T-cell (primary cell): ENCODE measurements at regions of chr2 and their contacts with region 1.

Region 1: GRCh38 chr2:202221873-202222272 is 16.5 kb downstream of the SUMO1 start:
- DNase-seq: no peak
- ATAC-seq: no peak
- H3K4me3 ChIP-seq: no peak overlapping the region
- H3K4me3 Mint-ChIP-seq: no peak overlapping the region
- H3K27ac ChIP-seq: no peak overlapping the region
- H3K27ac Mint-ChIP-seq: peak overlapping the region in 1 of 2 donors; percentile 0
- H3K4me1 ChIP-seq: peaks cover 0 to 2% of the 10 kb centered on the region in 2 experiments
- H3K4me1 Mint-ChIP-seq: peaks cover 47 to 53% (median 50%) of the 10 kb centered on the region in 3 donors
- H3K27me3 ChIP-seq: no peaks in the 10 kb centered on the region
- H3K27me3 Mint-ChIP-seq: no peaks in the 10 kb centered on the region

Region 2: GRCh38 chr2:202249521-202249850 is 27.6 kb after region 1 on chr2:
- CTCF ChIA-PET with region 1: no interaction called
- POLR2A ChIA-PET with region 1: no interaction called
- DNase-seq: no peak
- ATAC-seq: no peak
- H3K4me3 ChIP-seq: no peak overlapping the region
- H3K4me3 Mint-ChIP-seq: no peak overlapping the region
- H3K27ac ChIP-seq: no peak overlapping the region
- H3K27ac Mint-ChIP-seq: no peak overlapping the region
- H3K4me1 ChIP-seq: no peaks in the 10 kb centered on the region
- H3K4me1 Mint-ChIP-seq: no peaks in the 10 kb centered on the region
- H3K27me3 ChIP-seq: no peaks in the 10 kb centered on the region
- H3K27me3 Mint-ChIP-seq: peaks cover 3 to 4% of the 10 kb centered on the region in 2 donors

Region 3: DNA sequence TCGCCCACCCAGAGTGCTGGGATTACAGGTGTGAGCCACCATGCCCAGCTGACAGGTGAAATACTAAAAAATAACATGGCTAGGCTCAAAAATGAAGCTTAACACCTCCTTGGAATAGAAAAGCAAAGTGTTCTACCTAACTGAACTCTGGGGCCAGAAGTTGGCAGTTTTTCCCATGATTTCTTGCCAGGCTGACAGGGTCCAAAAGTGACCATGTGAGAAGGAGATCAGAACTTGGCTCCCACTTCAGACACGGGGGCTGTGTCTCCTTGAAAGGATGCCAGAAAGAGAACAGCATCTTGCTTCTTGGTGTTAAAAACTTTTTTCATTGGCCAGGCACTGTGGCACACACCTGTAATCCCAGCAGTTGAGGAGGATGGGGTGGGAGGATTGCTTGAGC is 201.3 kb after region 1 on chr2:
- CTCF ChIA-PET with region 1: no interaction called
- POLR2A ChIA-PET with region 1: interaction called in 1 of 2 experiments, 10 read pairs
- DNase-seq: no peak
- ATAC-seq: no peak
- H3K4me3 ChIP-seq: no peak overlapping the region
- H3K4me3 Mint-ChIP-seq: no peak overlapping the region
- H3K27ac ChIP-seq: no peak overlapping the region
- H3K27ac Mint-ChIP-seq: no peak overlapping the region
- H3K4me1 ChIP-seq: no peaks in the 10 kb centered on the region
- H3K4me1 Mint-ChIP-seq: peaks cover 8 to 17% (median 15%) of the 10 kb centered on the region in 3 donors
- H3K27me3 ChIP-seq: no peaks in the 10 kb centered on the region
- H3K27me3 Mint-ChIP-seq: no peaks in the 10 kb centered on the region

Region 4: GRCh38 chr2:202486351-202486750 is 264.5 kb after region 1 on chr2:
- CTCF ChIA-PET with region 1: no interaction called
- POLR2A ChIA-PET with region 1: no interaction called
- DNase-seq: no peak
- ATAC-seq: no peak
- H3K4me3 ChIP-seq: no peak overlapping the region
- H3K4me3 Mint-ChIP-seq: no peak overlapping the region
- H3K27ac ChIP-seq: no peak overlapping the region
- H3K27ac Mint-ChIP-seq: no peak overlapping the region
- H3K4me1 ChIP-seq: no peaks in the 10 kb centered on the region
- H3K4me1 Mint-ChIP-seq: no peaks in the 10 kb centered on the region
- H3K27me3 ChIP-seq: no peaks in the 10 kb centered on the region
- H3K27me3 Mint-ChIP-seq: no peaks in the 10 kb centered on the region